HepG2 (cell line): ENCODE measurements at regions of chr12 and their contacts with region 1.

Region 1: DNA sequence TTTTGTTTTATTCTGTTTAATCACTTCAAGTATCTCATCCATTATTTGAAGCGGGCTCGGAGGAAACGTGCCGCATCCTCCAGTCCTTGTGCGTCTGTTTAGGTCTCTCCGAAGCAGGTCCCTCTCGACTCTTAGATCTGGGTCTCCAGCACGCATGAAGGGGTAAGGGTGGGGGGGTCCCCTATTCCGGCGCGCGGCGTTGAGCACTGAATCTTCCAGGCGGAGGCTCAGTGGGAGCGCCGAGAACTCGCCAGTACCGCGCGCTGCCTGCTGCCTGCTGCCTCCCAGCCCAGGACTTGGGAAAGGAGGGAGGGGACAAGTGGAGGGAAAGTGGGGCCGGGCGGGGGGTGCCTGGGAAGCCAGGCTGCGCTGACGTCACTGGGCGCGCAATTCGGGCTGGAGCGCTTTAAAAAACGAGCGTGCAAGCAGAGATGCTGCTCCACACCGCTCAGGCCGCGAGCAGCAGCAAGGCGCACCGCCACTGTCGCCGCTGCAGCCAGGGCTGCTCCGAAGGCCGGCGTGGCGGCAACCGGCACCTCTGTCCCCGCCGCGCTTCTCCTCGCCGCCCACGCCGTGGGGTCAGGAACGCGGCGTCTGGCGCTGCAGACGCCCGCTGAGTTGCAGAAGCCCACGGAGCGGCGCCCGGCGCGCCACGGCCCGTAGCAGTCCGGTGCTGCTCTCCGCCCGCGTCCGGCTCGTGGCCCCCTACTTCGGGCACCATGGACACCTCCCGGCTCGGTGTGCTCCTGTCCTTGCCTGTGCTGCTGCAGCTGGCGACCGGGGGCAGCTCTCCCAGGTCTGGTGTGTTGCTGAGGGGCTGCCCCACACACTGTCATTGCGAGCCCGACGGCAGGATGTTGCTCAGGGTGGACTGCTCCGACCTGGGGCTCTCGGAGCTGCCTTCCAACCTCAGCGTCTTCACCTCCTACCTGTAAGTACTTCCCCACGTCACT is at the start of gene LGR5:
- DNase-seq: peak; percentile 85
- ATAC-seq: peak; percentile 72
- H3K4me3 ChIP-seq: peak within 1 kb of the TSS; percentile 90 to 97 (median 91)
- H3K27ac ChIP-seq: peak within 1 kb of the TSS; percentile 82
- H3K4me1 ChIP-seq: peaks cover 46% of the 10 kb centered on the region
- H3K27me3 ChIP-seq: no peaks in the 10 kb centered on the region; a peak in 2 of 5 replicates
- CTCF ChIP-seq: no peak
- EP300 ChIP-seq: no peak
- POLR2A ChIP-seq: peak; percentile 91 to 92
- RAD21 ChIP-seq: peak; percentile 21
- total RNA-seq, gene LGR5: 20.6 and 37.0 TPM in 2 replicates

Region 2: GRCh38 chr12:71157601-71158233 is 281.9 kb before region 1 on chr12 and contains the start of gene TSPAN8:
- CTCF ChIA-PET with region 1: no interaction called
- POLR2A ChIA-PET with region 1: no interaction called
- in situ Hi-C with region 1: loop called (anchors 5 kb)
- intact Hi-C with region 1: loop called (anchors 10 kb)
- DNase-seq: peak; percentile 64
- ATAC-seq: peak; percentile 28; the same call in 2 of the 3 replicates
- H3K4me3 ChIP-seq: no peak within 1 kb of the TSS; a peak in 1 of 6 replicates
- H3K27ac ChIP-seq: peak within 1 kb of the TSS; percentile 54
- H3K4me1 ChIP-seq: peaks cover 83% of the 10 kb centered on the region
- H3K27me3 ChIP-seq: no peaks in the 10 kb centered on the region
- CTCF ChIP-seq: no peak
- EP300 ChIP-seq: no peak
- POLR2A ChIP-seq: no peak
- RAD21 ChIP-seq: no peak
- total RNA-seq, gene TSPAN8: 3.2 and 3.9 TPM in 2 replicates

Region 3: GRCh38 chr12:71415336-71416231 is 24.1 kb before region 1 on chr12:
- CTCF ChIA-PET with region 1: interaction called, 17 read pairs
- POLR2A ChIA-PET with region 1: no interaction called
- in situ Hi-C with region 1: no loop called
- intact Hi-C with region 1: loop called (anchors 1 kb)
- DNase-seq: peak; percentile 60
- ATAC-seq: peak; percentile 90
- H3K4me3 ChIP-seq: no peak overlapping the region
- H3K27ac ChIP-seq: no peak overlapping the region
- H3K4me1 ChIP-seq: no peaks in the 10 kb centered on the region
- H3K27me3 ChIP-seq: no peaks in the 10 kb centered on the region
- CTCF ChIP-seq: peak; percentile 87
- EP300 ChIP-seq: no peak
- POLR2A ChIP-seq: no peak
- RAD21 ChIP-seq: peak; percentile 68

Region 4: DNA sequence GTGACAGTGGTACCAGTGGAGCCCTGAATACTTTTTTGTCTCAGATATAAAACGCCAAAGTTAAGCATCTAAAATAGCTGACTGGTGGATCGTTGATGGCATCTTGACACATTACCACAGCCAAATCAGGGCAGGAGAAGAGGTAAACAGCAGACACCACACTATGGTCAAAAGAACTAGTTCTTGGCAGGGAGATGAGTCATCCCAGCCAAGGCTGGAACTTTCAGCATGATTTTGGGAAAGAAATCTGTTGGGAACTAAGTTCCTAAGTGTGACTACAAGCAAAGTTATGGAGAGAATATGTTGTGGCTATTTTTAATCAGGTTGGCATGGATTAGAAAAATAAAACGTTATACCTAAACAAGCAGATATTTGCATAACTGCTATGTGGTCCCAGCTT is 36.9 kb after region 1 on chr12:
- CTCF ChIA-PET with region 1: no interaction called
- POLR2A ChIA-PET with region 1: interaction called, 6 read pairs
- in situ Hi-C with region 1: no loop called
- intact Hi-C with region 1: loop called (anchors 5 kb)
- DNase-seq: no peak
- ATAC-seq: no peak
- H3K4me3 ChIP-seq: no peak overlapping the region
- H3K27ac ChIP-seq: no peak overlapping the region
- H3K4me1 ChIP-seq: peaks cover 27% of the 10 kb centered on the region
- H3K27me3 ChIP-seq: no peaks in the 10 kb centered on the region
- CTCF ChIP-seq: no peak
- EP300 ChIP-seq: no peak
- POLR2A ChIP-seq: no peak
- RAD21 ChIP-seq: no peak

Region 5: DNA sequence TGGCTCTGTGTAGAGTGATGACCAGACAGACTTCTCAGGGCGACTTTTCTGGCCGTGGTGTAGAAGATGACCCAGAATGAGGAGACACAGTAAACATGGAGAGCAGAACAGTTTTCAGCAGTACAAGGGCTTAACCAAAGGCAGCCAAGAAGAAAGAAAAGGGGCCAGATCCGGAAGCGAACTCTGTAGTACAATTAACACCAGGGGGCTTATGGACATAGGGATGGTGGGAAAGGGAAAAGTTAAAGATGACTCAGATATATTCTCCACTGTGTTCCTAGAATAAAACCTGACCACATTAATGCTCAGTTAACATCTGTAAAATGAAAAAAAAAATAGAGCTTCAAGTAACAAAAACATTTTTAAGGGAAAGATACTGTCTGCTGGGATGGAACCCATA is 60.2 kb after region 1 on chr12:
- CTCF ChIA-PET with region 1: no interaction called
- POLR2A ChIA-PET with region 1: no interaction called
- in situ Hi-C with region 1: no loop called
- intact Hi-C with region 1: no loop called
- DNase-seq: no peak
- ATAC-seq: no peak
- H3K4me3 ChIP-seq: no peak overlapping the region
- H3K27ac ChIP-seq: no peak overlapping the region
- H3K4me1 ChIP-seq: no peaks in the 10 kb centered on the region
- H3K27me3 ChIP-seq: no peaks in the 10 kb centered on the region
- CTCF ChIP-seq: no peak
- EP300 ChIP-seq: no peak
- POLR2A ChIP-seq: no peak
- RAD21 ChIP-seq: no peak

Region 6: GRCh38 chr12:71551529-71551928 is 111.9 kb after region 1 on chr12:
- CTCF ChIA-PET with region 1: no interaction called
- POLR2A ChIA-PET with region 1: interaction called, 17 read pairs
- in situ Hi-C with region 1: no loop called
- intact Hi-C with region 1: loop called (anchors 2 kb)
- DNase-seq: no peak
- ATAC-seq: no peak
- H3K4me3 ChIP-seq: no peak overlapping the region
- H3K27ac ChIP-seq: no peak overlapping the region
- H3K4me1 ChIP-seq: peaks cover 48% of the 10 kb centered on the region
- H3K27me3 ChIP-seq: no peaks in the 10 kb centered on the region
- CTCF ChIP-seq: peak; percentile 34
- EP300 ChIP-seq: no peak
- POLR2A ChIP-seq: no peak
- RAD21 ChIP-seq: no peak

Region 7: DNA sequence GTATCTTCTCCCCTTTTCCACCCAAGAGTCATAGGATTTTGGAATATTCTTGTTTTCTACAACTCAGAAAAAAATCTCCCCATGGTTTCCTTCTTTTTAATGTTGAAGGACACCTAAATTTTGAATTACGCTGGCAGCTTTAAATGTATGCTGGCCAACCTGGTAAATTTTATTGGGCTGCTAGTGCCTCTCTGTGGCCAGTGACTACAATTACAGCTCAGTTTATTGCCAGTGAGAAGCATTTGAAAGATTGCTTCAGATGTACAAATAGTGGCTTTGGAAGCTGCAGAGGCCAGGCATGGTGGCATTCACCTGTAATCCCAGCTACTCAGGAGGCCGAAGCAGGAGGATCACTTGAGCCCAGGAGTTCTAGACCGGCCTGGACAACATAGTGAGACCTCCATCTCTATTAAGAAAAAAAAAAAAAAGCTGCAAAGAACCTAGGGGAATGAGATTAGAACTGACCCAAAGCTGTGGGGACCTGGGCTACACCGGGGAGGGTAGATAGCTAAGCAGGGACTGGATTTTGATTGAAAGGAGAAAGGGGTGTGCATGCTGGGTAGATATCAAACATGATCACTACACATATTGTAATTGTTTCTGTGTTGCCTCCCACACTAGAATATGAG is 307.5 kb after region 1 on chr12:
- CTCF ChIA-PET with region 1: no interaction called
- POLR2A ChIA-PET with region 1: no interaction called
- in situ Hi-C with region 1: no loop called
- intact Hi-C with region 1: loop called (anchors 5 kb)
- DNase-seq: peak; percentile 66
- ATAC-seq: peak; percentile 96
- H3K4me3 ChIP-seq: no peak overlapping the region; a peak in 1 of 6 replicates
- H3K27ac ChIP-seq: no peak overlapping the region
- H3K4me1 ChIP-seq: peaks cover 10% of the 10 kb centered on the region
- H3K27me3 ChIP-seq: no peaks in the 10 kb centered on the region; a peak in 1 of 5 replicates
- CTCF ChIP-seq: peak; percentile 86
- EP300 ChIP-seq: no peak
- POLR2A ChIP-seq: no peak
- RAD21 ChIP-seq: peak; percentile 69